H1 (cell line): ENCODE measurements at regions of chr3 and their contacts with region 1.

Region 1: DNA sequence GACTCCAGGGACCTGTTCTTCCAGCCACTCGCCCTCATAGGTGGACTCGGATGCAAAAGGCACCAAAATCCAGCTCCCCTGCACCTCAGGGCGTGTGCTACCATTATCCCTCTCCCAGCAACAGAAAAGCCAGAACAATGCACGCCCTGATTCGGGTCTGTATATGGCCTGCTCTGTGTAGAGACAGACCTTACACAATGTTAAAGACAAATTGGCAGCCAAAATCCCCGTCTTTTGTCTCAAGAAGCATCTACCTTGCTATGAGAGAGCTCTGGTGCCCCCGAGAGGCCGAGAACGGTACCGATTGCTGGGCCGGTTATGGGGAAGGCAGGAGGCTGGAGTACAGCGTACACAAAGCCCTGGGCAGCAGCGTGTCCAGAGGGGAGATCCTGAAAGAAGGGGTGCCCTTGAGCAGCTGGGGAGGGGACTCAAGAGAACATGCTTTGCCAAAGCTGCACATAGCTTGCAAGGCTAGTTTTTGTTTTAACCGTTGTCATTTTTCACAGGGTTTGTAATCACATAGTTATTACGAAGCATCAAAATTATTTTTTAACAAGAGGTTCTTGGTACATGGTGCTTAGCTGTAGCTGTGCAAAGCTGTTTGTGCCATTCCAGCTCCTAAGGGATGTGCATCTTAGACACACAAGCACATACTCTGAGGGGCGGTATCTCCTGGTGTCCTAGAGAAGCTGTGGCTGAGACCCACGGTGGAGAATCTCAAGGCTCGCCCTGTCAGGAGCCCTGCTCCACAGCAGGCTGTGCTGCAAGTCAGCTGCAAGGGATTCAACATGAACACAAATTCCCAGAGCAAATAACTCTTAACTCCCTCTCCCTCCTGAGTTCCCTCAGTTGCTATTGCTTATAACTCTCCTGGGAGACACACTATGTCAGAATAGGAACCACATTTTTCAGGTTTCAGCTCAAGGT is 461.5 kb upstream of the PPP2R3A start:
- DNase-seq: peak; percentile 75 to 95
- H3K4me3 ChIP-seq: peak overlapping the region; percentile 2 to 47 (median 20); a peak in 5 of 8 replicates
- H3K27ac ChIP-seq: peak overlapping the region; percentile 68; the same call in 1 of the 2 replicates
- H3K4me1 ChIP-seq: peaks cover 0 to 11% (median 3%) of the 10 kb centered on the region in 4 experiments; a peak in 5 of 7 replicates
- H3K27me3 ChIP-seq: no peaks in the 10 kb centered on the region
- CTCF ChIP-seq: peak; percentile 71 to 91 (median 79)
- EP300 ChIP-seq: no peak
- POLR2A ChIP-seq: no peak
- RAD21 ChIP-seq: peak; percentile 93 to 96

Region 2: GRCh38 chr3:135240426-135240825 is 263.6 kb before region 1 on chr3:
- CTCF ChIA-PET with region 1: interaction called, 17 read pairs
- POLR2A ChIA-PET with region 1: no interaction called
- DNase-seq: no peak
- H3K4me3 ChIP-seq: no peak overlapping the region
- H3K27ac ChIP-seq: no peak overlapping the region
- H3K4me1 ChIP-seq: peaks cover 0 to 7% (median 0%) of the 10 kb centered on the region in 4 experiments; a peak in 3 of 7 replicates
- H3K27me3 ChIP-seq: no peaks in the 10 kb centered on the region; a peak in 1 of 7 replicates
- CTCF ChIP-seq: peak; percentile 60 to 66 (median 64)
- EP300 ChIP-seq: no peak
- POLR2A ChIP-seq: no peak
- RAD21 ChIP-seq: peak; percentile 75 to 84

Region 3: GRCh38 chr3:135310317-135310716 is 193.7 kb before region 1 on chr3:
- CTCF ChIA-PET with region 1: no interaction called
- POLR2A ChIA-PET with region 1: no interaction called
- DNase-seq: no peak
- H3K4me3 ChIP-seq: no peak overlapping the region
- H3K27ac ChIP-seq: no peak overlapping the region
- H3K4me1 ChIP-seq: peaks cover 0 to 2% (median 0%) of the 10 kb centered on the region in 4 experiments; a peak in 1 of 7 replicates
- H3K27me3 ChIP-seq: no peaks in the 10 kb centered on the region
- CTCF ChIP-seq: no peak
- EP300 ChIP-seq: no peak
- POLR2A ChIP-seq: no peak
- RAD21 ChIP-seq: no peak

Region 4: GRCh38 chr3:135518628-135519027 is 14.6 kb after region 1 on chr3:
- CTCF ChIA-PET with region 1: interaction called, 20 read pairs
- POLR2A ChIA-PET with region 1: no interaction called
- DNase-seq: no peak
- H3K4me3 ChIP-seq: no peak overlapping the region
- H3K27ac ChIP-seq: no peak overlapping the region
- H3K4me1 ChIP-seq: no peaks in the 10 kb centered on the region
- H3K27me3 ChIP-seq: no peaks in the 10 kb centered on the region
- CTCF ChIP-seq: no peak
- EP300 ChIP-seq: no peak
- POLR2A ChIP-seq: no peak
- RAD21 ChIP-seq: no peak

Region 5: DNA sequence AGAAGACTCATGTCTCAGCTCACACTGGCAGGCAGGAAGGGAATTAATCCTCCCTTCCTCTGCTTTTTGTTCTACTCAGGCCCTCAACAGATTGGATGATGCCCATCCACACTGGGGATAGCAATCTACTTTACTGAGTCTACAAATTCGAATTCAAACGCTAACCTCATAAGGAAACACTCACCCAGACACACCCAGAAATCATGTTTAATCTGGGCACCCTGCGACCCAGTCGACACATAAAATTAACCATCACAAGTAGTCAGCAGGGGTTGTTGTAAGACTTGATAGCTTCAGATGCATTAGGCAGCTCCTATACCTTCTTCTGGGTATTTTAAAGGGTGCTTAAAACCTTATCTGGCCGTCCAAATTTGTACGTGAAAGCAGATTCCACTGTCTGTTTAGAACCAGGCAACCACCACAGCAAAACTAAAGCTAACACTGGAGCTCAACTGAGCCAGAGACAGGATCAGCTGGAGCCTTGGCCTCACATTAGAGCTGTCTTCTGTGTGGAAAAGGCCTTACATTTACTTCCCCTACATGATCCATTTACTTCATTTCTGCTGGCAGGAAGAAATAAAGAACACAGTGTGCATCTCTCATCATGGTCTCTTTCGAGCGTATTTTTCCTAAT is 54.2 kb after region 1 on chr3:
- CTCF ChIA-PET with region 1: no interaction called
- POLR2A ChIA-PET with region 1: no interaction called
- DNase-seq: no peak
- H3K4me3 ChIP-seq: no peak overlapping the region
- H3K27ac ChIP-seq: no peak overlapping the region
- H3K4me1 ChIP-seq: no peaks in the 10 kb centered on the region
- H3K27me3 ChIP-seq: no peaks in the 10 kb centered on the region
- CTCF ChIP-seq: no peak
- EP300 ChIP-seq: no peak
- POLR2A ChIP-seq: no peak
- RAD21 ChIP-seq: no peak